ENCODE measurements at regions of chr6 and their contacts with region 1.

Region 1: DNA sequence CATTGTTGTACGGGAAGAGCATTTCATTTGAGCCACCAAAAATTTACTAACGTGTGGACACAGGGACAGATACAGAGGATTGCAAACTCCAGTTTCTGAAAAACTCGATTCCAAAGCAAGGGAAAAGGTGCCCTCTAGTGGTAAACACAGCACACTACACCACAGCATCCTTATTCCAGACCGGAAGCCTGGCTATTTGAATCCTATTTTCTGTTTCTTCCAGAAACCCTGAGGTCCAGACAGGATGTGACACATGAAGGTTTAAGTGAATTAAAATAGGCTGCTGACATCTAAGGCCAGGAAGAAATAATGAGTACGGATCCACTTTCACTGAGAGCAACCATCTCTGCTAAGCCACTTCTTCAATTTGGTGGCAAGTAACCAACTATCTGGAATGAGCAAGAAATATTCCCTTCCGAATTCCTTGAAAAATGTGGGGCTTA is 31.8 kb upstream of the GMPR start:
- DNase-seq: peak; percentile 71
- ATAC-seq: peak; percentile 44
- H3K4me3 ChIP-seq: no peak overlapping the region
- H3K4me3 Mint-ChIP-seq: peak overlapping the region; percentile 67
- H3K27ac ChIP-seq: no peak overlapping the region
- H3K27ac Mint-ChIP-seq: peak overlapping the region; percentile 67
- H3K4me1 ChIP-seq: peaks cover 20 to 21% of the 10 kb centered on the region in 2 donors
- H3K4me1 Mint-ChIP-seq: peaks cover 26% of the 10 kb centered on the region
- H3K27me3 ChIP-seq: peaks cover 0 to 4% (median 2%) of the 10 kb centered on the region in 4 experiments
- H3K27me3 Mint-ChIP-seq: peaks cover 12% of the 10 kb centered on the region
- CTCF ChIP-seq: peak; percentile 98

Region 2: GRCh38 chr6:15662326-15663129 is 544.1 kb before region 1 on chr6 and contains the start of gene DTNBP1:
- CTCF ChIA-PET with region 1: interaction called, 5 read pairs
- POLR2A ChIA-PET with region 1: no interaction called
- intact Hi-C with region 1: loop called (anchors 1 kb)
- DNase-seq: peak; percentile 95
- ATAC-seq: peak; percentile 73
- H3K4me3 ChIP-seq: peak within 1 kb of the TSS; percentile 50 to 97 (median 78)
- H3K4me3 Mint-ChIP-seq: peak within 1 kb of the TSS; percentile 94
- H3K27ac ChIP-seq: peak within 1 kb of the TSS; percentile 91 to 97
- H3K27ac Mint-ChIP-seq: peak within 1 kb of the TSS; percentile 95
- H3K4me1 ChIP-seq: peaks cover 36 to 49% of the 10 kb centered on the region in 2 donors
- H3K4me1 Mint-ChIP-seq: peaks cover 51% of the 10 kb centered on the region
- H3K27me3 ChIP-seq: no peaks in the 10 kb centered on the region
- H3K27me3 Mint-ChIP-seq: no peaks in the 10 kb centered on the region
- CTCF ChIP-seq: no peak
- total RNA-seq, gene DTNBP1: 73.0 and 73.6 TPM in 2 replicates

Region 3: GRCh38 chr6:15685619-15686018 is 521.0 kb before region 1 on chr6:
- CTCF ChIA-PET with region 1: interaction called, 20 read pairs
- POLR2A ChIA-PET with region 1: no interaction called
- intact Hi-C with region 1: no loop called
- DNase-seq: no peak
- ATAC-seq: no peak
- H3K4me3 ChIP-seq: no peak overlapping the region
- H3K4me3 Mint-ChIP-seq: no peak overlapping the region
- H3K27ac ChIP-seq: no peak overlapping the region
- H3K27ac Mint-ChIP-seq: no peak overlapping the region
- H3K4me1 ChIP-seq: no peaks in the 10 kb centered on the region
- H3K4me1 Mint-ChIP-seq: peaks cover 9% of the 10 kb centered on the region
- H3K27me3 ChIP-seq: no peaks in the 10 kb centered on the region
- H3K27me3 Mint-ChIP-seq: peaks cover 4% of the 10 kb centered on the region
- CTCF ChIP-seq: no peak

Region 4: DNA sequence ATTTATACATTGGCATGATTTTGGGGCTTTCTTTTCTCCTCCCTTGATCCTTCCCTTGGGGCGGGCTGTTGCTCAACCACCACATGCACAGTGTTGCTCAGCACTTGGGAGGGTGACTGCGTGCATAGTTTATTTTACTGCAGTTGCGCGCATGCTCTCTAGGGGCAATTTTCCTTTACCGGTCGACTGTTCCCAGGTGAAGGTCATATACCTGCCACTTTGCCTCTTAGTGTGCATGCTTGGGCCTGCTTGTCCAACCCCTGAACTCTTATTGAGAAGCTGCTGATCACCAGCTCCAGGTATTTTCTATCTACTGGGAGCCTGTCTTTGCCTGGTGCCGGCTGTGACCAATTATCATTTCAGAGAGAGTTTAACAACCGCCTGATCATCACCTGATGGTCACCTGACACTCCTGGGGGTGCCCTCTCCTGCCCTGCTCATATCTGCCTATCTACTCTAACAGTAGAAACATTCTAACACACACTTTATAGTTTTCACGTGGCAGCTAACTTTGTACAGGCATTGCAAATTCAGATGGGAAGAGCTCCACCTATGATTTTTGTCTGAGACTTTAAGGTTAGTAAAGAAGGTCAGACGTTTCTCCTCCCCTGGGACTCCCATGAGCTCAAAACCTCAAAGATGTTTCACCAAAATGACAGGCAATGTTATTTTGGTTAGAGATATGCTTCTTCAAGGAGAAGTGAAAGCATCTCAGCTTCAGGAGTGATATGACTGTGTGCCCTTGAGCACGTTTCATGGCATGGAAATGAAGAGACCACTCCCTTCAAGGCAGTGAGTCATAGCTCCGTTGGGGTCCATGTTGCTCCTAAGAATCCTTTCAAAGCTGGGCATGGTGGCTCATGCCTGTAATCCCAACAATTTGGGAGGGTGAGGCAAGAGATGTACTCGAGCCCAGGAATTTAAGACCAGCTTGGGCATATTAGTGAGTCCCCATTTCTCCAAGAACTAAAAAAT is 305.2 kb before region 1 on chr6:
- CTCF ChIA-PET with region 1: interaction called, 10 read pairs
- POLR2A ChIA-PET with region 1: no interaction called
- intact Hi-C with region 1: loop called (anchors 1 kb)
- DNase-seq: peak; percentile 93
- ATAC-seq: peak; percentile 80
- H3K4me3 ChIP-seq: peak overlapping the region in 3 of 5 experiments; percentile 19 to 43 (median 42)
- H3K4me3 Mint-ChIP-seq: peak overlapping the region; percentile 85
- H3K27ac ChIP-seq: peak overlapping the region; percentile 84 to 93
- H3K27ac Mint-ChIP-seq: peak overlapping the region; percentile 93
- H3K4me1 ChIP-seq: peaks cover 60 to 61% of the 10 kb centered on the region in 2 donors
- H3K4me1 Mint-ChIP-seq: peaks cover 80% of the 10 kb centered on the region
- H3K27me3 ChIP-seq: no peaks in the 10 kb centered on the region
- H3K27me3 Mint-ChIP-seq: no peaks in the 10 kb centered on the region
- CTCF ChIP-seq: peak; percentile 17

Region 5: DNA sequence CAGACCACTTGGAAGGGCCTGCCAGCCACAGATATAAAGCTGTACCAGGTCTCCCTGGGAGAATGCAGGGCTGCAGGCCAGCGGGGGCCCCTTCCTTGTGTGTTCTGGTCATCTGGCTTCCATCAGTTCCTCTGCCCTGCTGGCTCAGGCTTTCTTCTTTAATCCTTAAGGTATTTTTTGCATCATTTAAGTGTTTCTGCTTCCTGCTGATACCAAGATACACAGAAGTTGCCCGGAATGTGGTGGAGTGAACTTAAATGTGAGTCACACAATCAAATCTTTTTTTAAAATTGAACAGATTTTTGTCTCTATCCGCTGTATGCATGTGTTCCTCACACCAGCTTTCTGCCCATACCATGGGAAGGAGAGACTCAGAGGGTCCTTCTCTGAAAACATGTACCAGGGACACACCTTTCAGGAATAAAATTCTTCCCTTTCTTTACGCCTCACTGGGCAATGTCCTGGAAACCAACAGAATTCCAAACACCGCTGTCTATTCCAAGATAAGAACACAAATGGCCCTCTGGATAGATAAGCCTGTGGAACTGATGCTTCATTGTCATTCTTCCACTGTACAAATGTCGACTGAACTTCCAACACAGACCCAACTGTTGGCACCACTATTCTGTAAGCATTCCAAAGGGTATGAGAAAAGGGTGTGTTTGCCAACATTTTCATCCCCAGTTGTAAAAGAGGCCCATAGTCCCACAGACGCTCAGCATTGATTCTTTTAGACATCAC is 283.9 kb before region 1 on chr6:
- CTCF ChIA-PET with region 1: no interaction called
- POLR2A ChIA-PET with region 1: no interaction called
- intact Hi-C with region 1: no loop called
- DNase-seq: no peak
- ATAC-seq: no peak
- H3K4me3 ChIP-seq: no peak overlapping the region
- H3K4me3 Mint-ChIP-seq: no peak overlapping the region
- H3K27ac ChIP-seq: no peak overlapping the region
- H3K27ac Mint-ChIP-seq: no peak overlapping the region
- H3K4me1 ChIP-seq: no peaks in the 10 kb centered on the region
- H3K4me1 Mint-ChIP-seq: no peaks in the 10 kb centered on the region
- H3K27me3 ChIP-seq: no peaks in the 10 kb centered on the region
- H3K27me3 Mint-ChIP-seq: no peaks in the 10 kb centered on the region
- CTCF ChIP-seq: no peak

Region 6: GRCh38 chr6:16118825-16119224 is 87.8 kb before region 1 on chr6:
- CTCF ChIA-PET with region 1: no interaction called
- POLR2A ChIA-PET with region 1: no interaction called
- intact Hi-C with region 1: no loop called
- DNase-seq: no peak
- ATAC-seq: no peak
- H3K4me3 ChIP-seq: no peak overlapping the region
- H3K4me3 Mint-ChIP-seq: no peak overlapping the region
- H3K27ac ChIP-seq: no peak overlapping the region
- H3K27ac Mint-ChIP-seq: no peak overlapping the region
- H3K4me1 ChIP-seq: no peaks in the 10 kb centered on the region
- H3K4me1 Mint-ChIP-seq: no peaks in the 10 kb centered on the region
- H3K27me3 ChIP-seq: no peaks in the 10 kb centered on the region
- H3K27me3 Mint-ChIP-seq: peaks cover 12% of the 10 kb centered on the region
- CTCF ChIP-seq: no peak

Region 7: GRCh38 chr6:16183187-16183664 is 23.4 kb before region 1 on chr6:
- CTCF ChIA-PET with region 1: interaction called, 137 read pairs
- POLR2A ChIA-PET with region 1: no interaction called
- intact Hi-C with region 1: loop called (anchors 2 kb)
- DNase-seq: peak; percentile 59
- ATAC-seq: peak; percentile 66
- H3K4me3 ChIP-seq: no peak overlapping the region
- H3K4me3 Mint-ChIP-seq: no peak overlapping the region
- H3K27ac ChIP-seq: no peak overlapping the region
- H3K27ac Mint-ChIP-seq: no peak overlapping the region
- H3K4me1 ChIP-seq: peaks cover 4 to 11% of the 10 kb centered on the region in 2 donors
- H3K4me1 Mint-ChIP-seq: peaks cover 20% of the 10 kb centered on the region
- H3K27me3 ChIP-seq: peaks cover 0 to 4% (median 0%) of the 10 kb centered on the region in 4 experiments
- H3K27me3 Mint-ChIP-seq: no peaks in the 10 kb centered on the region
- CTCF ChIP-seq: peak; percentile 86

Region 8: DNA sequence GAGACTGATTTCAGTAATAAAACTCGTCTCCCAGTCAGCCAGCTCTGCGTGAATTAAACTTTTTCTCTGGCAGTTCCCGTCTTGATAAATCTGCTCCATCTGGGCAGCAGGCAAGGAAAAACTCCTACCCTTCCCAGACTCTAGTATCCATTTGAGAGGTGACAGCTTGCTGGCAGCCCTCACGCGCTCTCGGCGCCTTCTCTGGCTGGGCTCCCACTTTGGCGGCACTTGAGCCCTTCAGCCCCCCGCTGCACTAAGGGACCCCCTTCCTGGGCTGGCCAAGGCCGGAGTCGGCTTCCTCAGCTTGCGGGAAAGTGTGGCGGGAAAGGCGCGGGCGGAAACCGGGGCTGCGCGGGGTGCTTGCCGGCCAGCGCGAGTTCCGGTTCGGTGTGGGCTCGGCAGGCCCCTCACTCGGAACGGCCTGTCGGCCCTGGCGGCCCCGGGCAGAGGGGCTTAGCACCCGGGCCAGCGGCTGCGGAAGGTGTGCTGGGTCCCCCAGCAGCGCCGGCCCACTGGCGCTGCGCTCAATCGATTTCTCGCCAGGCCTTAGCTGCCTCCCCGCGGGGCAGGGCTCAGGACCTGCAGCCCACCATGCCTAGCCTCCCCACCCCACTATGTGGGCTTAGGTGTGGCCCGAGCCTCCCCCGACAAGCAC is 10.0 kb after region 1 on chr6:
- CTCF ChIA-PET with region 1: interaction called, 19 read pairs
- POLR2A ChIA-PET with region 1: interaction called, 5 read pairs
- intact Hi-C with region 1: no loop called
- DNase-seq: no peak
- ATAC-seq: no peak
- H3K4me3 ChIP-seq: no peak overlapping the region
- H3K4me3 Mint-ChIP-seq: no peak overlapping the region
- H3K27ac ChIP-seq: no peak overlapping the region
- H3K27ac Mint-ChIP-seq: no peak overlapping the region
- H3K4me1 ChIP-seq: no peaks in the 10 kb centered on the region
- H3K4me1 Mint-ChIP-seq: peaks cover 3% of the 10 kb centered on the region
- H3K27me3 ChIP-seq: peaks cover 0 to 22% (median 5%) of the 10 kb centered on the region in 4 experiments
- H3K27me3 Mint-ChIP-seq: peaks cover 49% of the 10 kb centered on the region
- CTCF ChIP-seq: no peak

Region 9: GRCh38 chr6:16901782-16902181 is 695.2 kb after region 1 on chr6:
- CTCF ChIA-PET with region 1: no interaction called
- POLR2A ChIA-PET with region 1: no interaction called
- intact Hi-C with region 1: no loop called
- DNase-seq: no peak
- ATAC-seq: no peak
- H3K4me3 ChIP-seq: no peak overlapping the region
- H3K4me3 Mint-ChIP-seq: no peak overlapping the region
- H3K27ac ChIP-seq: no peak overlapping the region
- H3K27ac Mint-ChIP-seq: no peak overlapping the region
- H3K4me1 ChIP-seq: no peaks in the 10 kb centered on the region
- H3K4me1 Mint-ChIP-seq: no peaks in the 10 kb centered on the region
- H3K27me3 ChIP-seq: no peaks in the 10 kb centered on the region
- H3K27me3 Mint-ChIP-seq: peaks cover 27% of the 10 kb centered on the region
- CTCF ChIP-seq: no peak